ENCODE measurements at regions of chr9 and their contacts with region 1.

Region 1: GRCh38 chr9:121322037-121322775 is 47.8 kb downstream of the STOM start:
- DNase-seq: no peak
- ATAC-seq: no peak
- H3K4me3 ChIP-seq: no peak overlapping the region
- H3K27ac ChIP-seq: peak overlapping the region; percentile 79
- H3K4me1 ChIP-seq: peaks cover 23% of the 10 kb centered on the region
- H3K27me3 ChIP-seq: no peaks in the 10 kb centered on the region
- CTCF ChIP-seq: no peak

Region 2: DNA sequence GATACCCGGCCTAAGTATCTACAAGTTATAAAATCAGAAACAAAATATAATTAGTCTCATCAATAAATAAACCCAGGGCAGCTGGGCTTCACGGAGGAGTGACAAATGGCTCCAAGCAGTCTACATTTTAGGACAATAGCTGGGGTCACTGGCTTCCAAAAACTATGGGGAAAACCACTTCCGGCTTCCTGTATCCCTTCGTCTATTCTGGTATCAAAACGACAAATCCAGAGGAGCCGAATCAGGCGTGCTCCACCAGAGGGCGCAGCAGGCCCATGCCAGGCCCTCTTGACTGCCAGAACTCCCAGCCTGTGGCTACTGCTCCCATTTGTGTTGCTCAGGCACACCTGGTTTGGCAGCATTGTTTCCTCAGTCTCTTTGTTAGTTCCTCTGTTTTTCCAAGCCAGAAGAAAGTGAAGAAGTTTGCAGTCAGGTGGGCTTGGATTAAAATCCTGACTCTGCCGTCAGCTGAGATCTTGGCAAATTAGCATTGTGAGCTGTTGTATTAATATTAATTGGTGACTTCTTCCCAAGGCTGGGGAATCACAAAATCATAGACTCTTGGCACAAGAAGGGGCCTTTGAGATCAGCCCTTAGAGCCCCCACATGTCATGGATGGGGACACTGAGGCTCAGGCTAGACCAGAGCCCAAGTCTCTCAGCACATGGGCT is 108.9 kb before region 1 on chr9:
- intact Hi-C with region 1: loop called (anchors 5 kb)
- DNase-seq: peak; percentile 90 to 94
- ATAC-seq: peak; percentile 96 to 99 (median 98)
- H3K4me3 ChIP-seq: no peak overlapping the region
- H3K27ac ChIP-seq: no peak overlapping the region
- H3K4me1 ChIP-seq: no peaks in the 10 kb centered on the region
- H3K27me3 ChIP-seq: no peaks in the 10 kb centered on the region
- CTCF ChIP-seq: peak; percentile 94

Region 3: GRCh38 chr9:121362813-121363621 is 40.8 kb after region 1 on chr9:
- intact Hi-C with region 1: loop called in 1 of 2 experiments (anchors 5 kb)
- DNase-seq: no peak
- ATAC-seq: peak; percentile 36 to 67 (median 57)
- H3K4me3 ChIP-seq: peak overlapping the region; percentile 87
- H3K27ac ChIP-seq: peak overlapping the region; percentile 98
- H3K4me1 ChIP-seq: peaks cover 93% of the 10 kb centered on the region
- H3K27me3 ChIP-seq: no peaks in the 10 kb centered on the region
- CTCF ChIP-seq: no peak

Region 4: DNA sequence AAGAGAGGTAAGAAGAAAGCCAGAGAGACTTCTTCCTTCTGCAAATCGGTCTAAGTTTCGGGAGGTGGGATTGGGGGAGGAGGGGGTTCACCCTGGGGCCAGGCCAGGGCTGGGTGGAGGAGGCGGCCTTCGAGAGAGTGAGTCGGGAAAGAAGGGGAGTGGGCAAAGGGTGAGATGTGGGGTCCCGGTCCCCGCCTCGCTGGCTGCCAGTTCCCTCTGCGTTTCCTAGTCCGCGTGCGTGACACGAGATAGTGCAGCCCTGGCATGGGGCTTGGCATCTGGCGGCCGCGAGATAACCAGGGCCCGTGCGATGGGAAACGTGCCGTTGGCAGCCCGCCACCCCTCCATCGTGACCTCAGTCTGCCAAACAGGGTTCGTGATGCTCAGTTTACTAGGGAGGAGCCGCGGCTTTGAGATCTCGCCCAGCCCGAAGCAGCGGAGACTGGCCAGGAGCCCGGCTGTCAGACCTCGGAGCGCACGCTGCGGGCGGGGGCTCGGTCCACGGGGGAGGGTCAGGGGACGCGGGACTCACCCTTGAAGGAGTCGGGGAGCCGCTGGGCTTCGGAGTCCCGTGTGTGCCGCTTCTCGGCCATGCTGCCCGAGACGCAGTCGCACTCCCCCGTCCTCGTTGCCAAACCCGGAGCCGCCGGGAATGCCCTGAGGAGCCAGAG is 47.5 kb after region 1 on chr9 and contains the start of gene STOM:
- intact Hi-C with region 1: loop called in 1 of 2 experiments (anchors 2 kb)
- DNase-seq: peak; percentile 92 to 97
- ATAC-seq: peak; percentile 73 to 85 (median 78)
- H3K4me3 ChIP-seq: peak within 1 kb of the TSS; percentile 87
- H3K27ac ChIP-seq: peak within 1 kb of the TSS; percentile 98
- H3K4me1 ChIP-seq: peaks cover 54% of the 10 kb centered on the region
- H3K27me3 ChIP-seq: no peaks in the 10 kb centered on the region
- CTCF ChIP-seq: no peak
- total RNA-seq, gene STOM: 89.6 to 237 (median 114) TPM

Region 5: GRCh38 chr9:121376214-121376830 is 54.1 kb after region 1 on chr9:
- intact Hi-C with region 1: loop called (anchors 1 to 2 kb)
- DNase-seq: no peak
- ATAC-seq: no peak
- H3K4me3 ChIP-seq: no peak overlapping the region
- H3K27ac ChIP-seq: no peak overlapping the region
- H3K4me1 ChIP-seq: peaks cover 29% of the 10 kb centered on the region
- H3K27me3 ChIP-seq: no peaks in the 10 kb centered on the region
- CTCF ChIP-seq: peak; percentile 51

Region 6: GRCh38 chr9:121399883-121400607 is 77.8 kb after region 1 on chr9:
- intact Hi-C with region 1: loop called (anchors 1 to 2 kb)
- DNase-seq: no peak
- ATAC-seq: peak; percentile 58 to 85 (median 80)
- H3K4me3 ChIP-seq: no peak overlapping the region
- H3K27ac ChIP-seq: no peak overlapping the region
- H3K4me1 ChIP-seq: peaks cover 4% of the 10 kb centered on the region
- H3K27me3 ChIP-seq: no peaks in the 10 kb centered on the region
- CTCF ChIP-seq: peak; percentile 73

Measured in psoas muscle (tissue), 8 donors.